ENCODE measurements at regions of chr6 and their contacts with region 1.

Region 1: DNA sequence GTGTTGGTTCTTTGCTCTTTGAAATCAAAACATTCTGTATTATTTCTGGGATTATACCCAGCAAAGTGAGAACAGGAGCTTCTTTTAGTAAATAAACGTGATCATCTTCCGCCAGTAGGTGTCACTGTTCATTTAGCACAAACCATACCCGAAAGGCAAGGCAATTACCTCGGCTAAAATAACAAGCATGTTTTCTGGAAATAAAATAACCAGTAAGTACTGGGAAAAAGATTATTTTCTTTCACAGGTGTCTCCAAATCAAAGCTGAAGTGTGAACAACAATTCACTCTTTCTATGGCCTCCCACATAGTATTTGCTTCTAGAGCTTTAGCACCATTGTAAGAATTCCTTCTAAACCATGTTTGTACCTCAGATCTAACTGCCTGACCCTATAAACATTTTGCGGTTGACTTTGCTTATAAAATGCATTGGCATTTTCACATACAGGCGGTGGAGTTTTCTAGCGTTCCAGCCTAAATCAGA is 144.6 kb upstream of the AGPAT4 start:
- DNase-seq: peak in 1 of 2 donors; percentile 51
- ATAC-seq: peak; percentile 75 to 80
- H3K4me3 ChIP-seq: no peak overlapping the region
- H3K27ac ChIP-seq: peak overlapping the region; percentile 78 to 93 (median 82)
- H3K4me1 ChIP-seq: peaks cover 25 to 43% of the 10 kb centered on the region in 2 donors
- H3K27me3 ChIP-seq: no peaks in the 10 kb centered on the region
- CTCF ChIP-seq: peak; percentile 62 to 75 (median 72)
- POLR2A ChIP-seq: no peak

Region 2: DNA sequence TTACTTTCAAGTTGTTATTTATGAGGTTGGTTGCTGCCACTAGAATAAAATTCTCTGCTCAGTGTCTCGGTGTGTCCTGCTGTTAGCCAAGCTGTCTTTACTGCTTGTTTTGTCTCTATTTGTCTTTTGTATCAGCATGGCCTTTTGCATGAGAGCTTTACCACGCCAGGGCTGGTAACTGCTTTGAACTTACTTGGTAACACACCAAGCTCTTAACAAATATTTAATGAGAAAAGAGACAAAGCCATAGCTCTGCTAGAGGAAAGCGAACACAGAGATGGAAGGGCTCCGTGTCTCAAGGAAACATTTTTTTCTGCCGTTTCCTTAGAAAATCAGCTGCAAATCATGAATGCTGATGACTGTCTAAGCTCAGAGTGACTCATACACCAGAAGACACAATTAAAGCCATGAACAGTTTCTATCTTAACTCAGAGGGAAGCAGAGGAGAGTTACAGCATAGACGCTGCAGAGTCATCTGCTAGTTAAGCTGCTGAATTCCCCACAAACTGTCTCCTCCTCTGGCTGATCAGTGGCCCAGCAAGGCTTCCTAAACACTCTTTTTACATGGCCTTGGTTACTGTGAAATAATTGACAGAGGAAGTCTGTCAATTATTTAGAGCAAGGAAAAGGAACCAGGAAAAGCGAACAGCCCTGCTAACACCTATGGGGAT is 189.4 kb before region 1 on chr6:
- in situ Hi-C with region 1: no loop called
- intact Hi-C with region 1: no loop called
- DNase-seq: no peak
- ATAC-seq: peak in 1 of 2 donors; percentile 74
- H3K4me3 ChIP-seq: no peak overlapping the region
- H3K27ac ChIP-seq: peak overlapping the region; percentile 10 to 52 (median 37)
- H3K4me1 ChIP-seq: peaks cover 0 to 6% of the 10 kb centered on the region in 2 donors
- H3K27me3 ChIP-seq: no peaks in the 10 kb centered on the region
- CTCF ChIP-seq: no peak
- POLR2A ChIP-seq: no peak

Region 3: GRCh38 chr6:161393839-161394364 is 24.6 kb before region 1 on chr6:
- in situ Hi-C with region 1: no loop called
- intact Hi-C with region 1: loop called (anchors 2 kb)
- DNase-seq: peak; percentile 38 to 56
- ATAC-seq: peak; percentile 92 to 99
- H3K4me3 ChIP-seq: peak overlapping the region in 3 of 4 donors; percentile 26 to 36 (median 27)
- H3K27ac ChIP-seq: peak overlapping the region in 1 of 4 donors; percentile 17
- H3K4me1 ChIP-seq: peaks cover 9 to 18% of the 10 kb centered on the region in 2 donors
- H3K27me3 ChIP-seq: no peaks in the 10 kb centered on the region
- CTCF ChIP-seq: peak; percentile 66 to 76 (median 68)
- POLR2A ChIP-seq: no peak

Region 4: DNA sequence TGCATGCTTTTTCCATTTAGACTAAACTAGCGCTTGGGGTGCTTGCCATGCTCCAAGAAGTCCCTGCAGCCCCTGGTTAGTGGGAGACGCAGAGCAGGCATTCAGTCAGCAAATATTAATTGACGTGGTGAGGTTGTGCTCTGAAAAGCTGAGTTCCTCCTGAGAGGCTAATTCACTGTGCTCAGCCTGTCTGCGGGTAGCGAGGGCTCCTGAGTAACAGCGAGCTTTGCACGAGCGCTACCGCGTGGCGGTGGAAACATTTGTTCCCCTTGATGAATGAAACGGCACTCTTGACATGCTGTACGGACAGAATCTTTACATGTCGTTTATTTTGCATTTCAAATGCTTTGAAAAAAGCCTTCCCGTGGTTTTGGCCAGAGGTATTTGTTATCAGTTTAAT is 26.0 kb after region 1 on chr6:
- in situ Hi-C with region 1: no loop called
- intact Hi-C with region 1: loop called (anchors 2 kb)
- DNase-seq: peak; percentile 28 to 42
- ATAC-seq: peak; percentile 69 to 80
- H3K4me3 ChIP-seq: peak overlapping the region in 1 of 4 donors; percentile 11
- H3K27ac ChIP-seq: peak overlapping the region; percentile 32 to 67 (median 50)
- H3K4me1 ChIP-seq: peaks cover 5 to 15% of the 10 kb centered on the region in 2 donors
- H3K27me3 ChIP-seq: no peaks in the 10 kb centered on the region
- CTCF ChIP-seq: peak in 2 of 5 experiments; percentile 31 to 37
- POLR2A ChIP-seq: no peak

Region 5: DNA sequence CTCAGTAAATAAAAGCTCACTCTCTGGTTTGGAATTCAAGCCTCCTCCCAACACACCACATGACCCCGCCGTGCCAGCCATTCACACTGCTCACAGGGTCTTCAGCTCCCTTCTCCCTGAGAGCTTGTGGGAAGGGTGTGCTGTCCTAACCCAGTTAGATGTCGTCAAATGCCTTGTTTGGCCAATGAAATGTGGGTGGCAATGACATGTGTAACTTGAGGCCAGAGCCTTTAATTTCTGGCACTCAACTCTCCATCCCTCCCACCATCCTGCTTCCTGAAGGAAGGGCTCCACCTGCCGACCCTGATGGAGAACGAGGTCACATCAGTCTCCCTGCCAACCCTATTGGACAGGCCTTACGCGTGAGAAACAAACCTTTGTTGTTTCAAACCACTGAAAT is 79.9 kb after region 1 on chr6:
- in situ Hi-C with region 1: no loop called
- intact Hi-C with region 1: loop called (anchors 1 kb)
- DNase-seq: peak; percentile 27 to 53
- ATAC-seq: peak; percentile 77 to 90
- H3K4me3 ChIP-seq: no peak overlapping the region
- H3K27ac ChIP-seq: peak overlapping the region in 2 of 4 donors; percentile 9 to 33
- H3K4me1 ChIP-seq: no peaks in the 10 kb centered on the region
- H3K27me3 ChIP-seq: no peaks in the 10 kb centered on the region
- CTCF ChIP-seq: peak; percentile 35 to 63 (median 60)
- POLR2A ChIP-seq: no peak

Region 6: GRCh38 chr6:161536224-161536630 is 117.7 kb after region 1 on chr6:
- in situ Hi-C with region 1: no loop called
- intact Hi-C with region 1: no loop called
- DNase-seq: no peak
- ATAC-seq: peak in 1 of 2 donors; percentile 44
- H3K4me3 ChIP-seq: no peak overlapping the region
- H3K27ac ChIP-seq: no peak overlapping the region
- H3K4me1 ChIP-seq: peaks cover 4 to 7% of the 10 kb centered on the region in 2 donors
- H3K27me3 ChIP-seq: no peaks in the 10 kb centered on the region
- CTCF ChIP-seq: no peak
- POLR2A ChIP-seq: no peak

Region 7: DNA sequence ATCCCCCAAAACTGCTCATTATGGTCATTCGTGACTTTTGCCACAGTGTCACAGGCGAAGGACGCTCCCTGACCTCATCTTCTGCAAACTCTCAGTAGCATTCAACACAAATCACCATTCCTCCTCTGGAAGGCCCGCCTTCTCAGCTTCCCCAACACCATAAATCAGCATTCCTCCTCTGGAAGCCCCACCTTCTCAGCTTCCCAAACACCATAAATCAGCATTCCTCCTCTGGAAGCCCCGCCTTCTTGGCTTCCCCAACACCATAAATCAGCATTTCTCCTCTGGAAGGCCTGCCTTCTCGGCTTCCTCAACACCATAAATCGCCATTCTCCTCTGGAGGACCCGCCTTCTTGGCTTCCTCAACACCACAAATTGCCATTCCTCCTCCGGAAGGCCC is 143.4 kb after region 1 on chr6:
- in situ Hi-C with region 1: no loop called
- intact Hi-C with region 1: no loop called
- DNase-seq: no peak
- ATAC-seq: no peak
- H3K4me3 ChIP-seq: no peak overlapping the region
- H3K27ac ChIP-seq: no peak overlapping the region
- H3K4me1 ChIP-seq: no peaks in the 10 kb centered on the region
- H3K27me3 ChIP-seq: no peaks in the 10 kb centered on the region
- CTCF ChIP-seq: no peak
- POLR2A ChIP-seq: no peak

Region 8: DNA sequence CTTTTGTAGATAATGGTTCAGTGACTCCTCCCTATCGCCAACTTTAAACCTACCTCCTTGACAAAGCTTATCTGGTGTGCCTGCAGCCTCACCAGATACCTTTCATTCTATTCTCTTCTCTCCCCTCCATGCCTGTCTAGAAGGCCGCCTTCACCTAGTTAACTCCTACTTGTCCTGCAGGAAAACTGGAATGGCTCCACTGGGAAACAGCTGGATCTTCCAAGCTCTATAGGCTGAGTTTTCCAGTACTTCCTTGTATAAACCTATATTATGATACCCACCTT is 1302.8 kb after region 1 on chr6:
- in situ Hi-C with region 1: loop called in 2 of 4 experiments (anchors 25 kb)
- intact Hi-C with region 1: loop called (anchors 5 kb)
- DNase-seq: no peak
- ATAC-seq: peak; percentile 8 to 17
- H3K4me3 ChIP-seq: no peak overlapping the region
- H3K27ac ChIP-seq: peak overlapping the region; percentile 79 to 87 (median 84)
- H3K4me1 ChIP-seq: peaks cover 20 to 36% of the 10 kb centered on the region in 2 donors
- H3K27me3 ChIP-seq: no peaks in the 10 kb centered on the region
- CTCF ChIP-seq: no peak
- POLR2A ChIP-seq: no peak

Region 9: GRCh38 chr6:162882809-162883481 is 1464.4 kb after region 1 on chr6:
- in situ Hi-C with region 1: no loop called
- intact Hi-C with region 1: no loop called
- DNase-seq: no peak
- ATAC-seq: no peak
- H3K4me3 ChIP-seq: no peak overlapping the region
- H3K27ac ChIP-seq: no peak overlapping the region
- H3K4me1 ChIP-seq: no peaks in the 10 kb centered on the region
- H3K27me3 ChIP-seq: no peaks in the 10 kb centered on the region
- CTCF ChIP-seq: no peak
- POLR2A ChIP-seq: no peak

Measured in gastrocnemius medialis (tissue), 4 donors.